HEK293 (cell line): ENCODE measurements at regions of chr17 and their contacts with region 1.

Region 1: DNA sequence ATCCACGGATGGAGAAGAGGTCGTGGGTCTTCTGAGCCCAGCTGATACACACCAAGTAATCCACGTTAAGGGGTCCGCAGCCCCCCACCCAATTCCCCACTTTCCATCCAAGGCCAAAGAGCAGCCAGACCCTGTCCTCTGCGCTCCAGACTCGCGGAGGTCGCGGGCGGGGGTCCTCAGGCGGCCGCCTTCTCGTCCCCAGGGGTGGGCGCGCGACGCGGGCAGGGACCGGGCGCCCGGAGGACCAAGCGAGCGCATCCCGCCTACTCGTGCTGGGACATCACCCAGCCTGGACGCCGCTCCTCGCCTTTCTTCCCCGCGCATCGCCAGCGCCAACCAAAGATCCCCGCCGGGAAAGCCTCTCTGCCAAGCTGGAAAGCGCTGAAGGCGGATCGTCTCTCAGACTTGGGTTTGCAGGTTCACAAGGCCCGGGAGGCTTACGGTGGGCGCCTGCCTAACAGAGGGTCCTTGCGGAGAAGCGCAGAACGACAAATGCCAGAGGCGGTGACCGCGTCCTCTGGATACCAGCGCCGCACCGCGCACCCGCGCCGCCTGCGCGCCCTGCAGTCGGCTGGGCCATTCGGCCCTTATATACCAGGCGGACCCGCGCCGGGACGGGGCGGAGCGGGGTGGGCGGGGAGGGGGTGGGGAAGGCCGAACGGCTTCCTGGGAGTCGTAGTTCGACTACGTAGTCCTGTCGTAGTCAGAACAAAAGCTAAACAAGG is 471.6 kb downstream of the SOX9 start:
- H3K4me3 ChIP-seq: peak overlapping the region; percentile 85
- H3K27ac ChIP-seq: peak overlapping the region; percentile 75
- H3K4me1 ChIP-seq: peaks cover 8% of the 10 kb centered on the region; the same call in 1 of the 2 replicates
- CTCF ChIP-seq: peak; percentile 65

Region 2: DNA sequence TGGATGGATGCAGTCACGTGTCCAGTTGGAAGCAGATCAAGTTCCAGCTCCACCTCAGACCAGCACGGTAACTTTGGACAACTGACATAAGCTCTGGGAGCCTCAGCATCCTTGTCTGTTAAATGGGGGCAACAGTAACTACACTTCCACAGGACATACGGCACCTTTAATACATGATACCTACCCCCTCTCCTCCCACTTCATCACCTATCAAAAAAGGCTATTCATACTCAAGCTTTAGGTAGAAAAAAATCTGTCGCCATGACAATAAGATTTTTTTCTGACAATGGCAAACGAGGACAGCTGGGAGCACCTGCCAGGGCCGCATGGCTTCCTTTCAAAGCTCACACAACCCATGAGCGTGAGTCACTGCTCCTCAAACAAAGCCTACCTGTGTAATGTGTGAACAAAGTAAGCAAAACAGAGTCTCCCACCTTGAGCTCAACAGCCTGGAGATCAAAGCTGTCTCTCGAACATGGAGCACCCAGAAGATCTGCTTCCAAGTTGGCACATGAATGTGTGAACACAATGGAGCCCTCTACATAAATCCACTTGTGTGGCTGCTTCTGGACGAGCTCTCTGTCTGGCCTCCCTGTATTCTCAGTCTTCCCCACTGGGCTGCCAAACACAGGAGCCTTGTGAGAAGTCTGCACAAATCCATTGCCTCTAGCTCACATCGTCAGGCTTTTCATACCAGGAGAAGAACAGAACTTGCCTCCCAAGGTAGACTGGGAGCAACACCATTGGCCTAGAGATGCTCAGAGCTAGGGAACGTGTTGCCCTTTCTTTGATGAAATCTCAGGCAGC is 11.9 kb before region 1 on chr17:
- CTCF ChIA-PET with region 1: interaction called, 4 read pairs
- POLR2A ChIA-PET with region 1: interaction called, 41 read pairs
- H3K4me3 ChIP-seq: no peak overlapping the region
- H3K27ac ChIP-seq: no peak overlapping the region
- H3K4me1 ChIP-seq: peaks cover 3% of the 10 kb centered on the region; the same call in 1 of the 2 replicates
- CTCF ChIP-seq: no peak

Region 3: GRCh38 chr17:72613806-72614292 is 21.4 kb after region 1 on chr17:
- CTCF ChIA-PET with region 1: interaction called, 4 read pairs
- POLR2A ChIA-PET with region 1: interaction called, 22 read pairs
- H3K4me3 ChIP-seq: no peak overlapping the region
- H3K27ac ChIP-seq: no peak overlapping the region
- H3K4me1 ChIP-seq: peaks cover 6% of the 10 kb centered on the region; the same call in 1 of the 2 replicates
- CTCF ChIP-seq: no peak

Region 4: GRCh38 chr17:72699545-72699944 is 107.1 kb after region 1 on chr17:
- CTCF ChIA-PET with region 1: interaction called, 3 read pairs
- POLR2A ChIA-PET with region 1: interaction called, 10 read pairs
- H3K4me3 ChIP-seq: no peak overlapping the region
- H3K27ac ChIP-seq: no peak overlapping the region
- H3K4me1 ChIP-seq: peaks cover 3% of the 10 kb centered on the region; the same call in 1 of the 2 replicates
- CTCF ChIP-seq: no peak